MCF 10A (cell line): ENCODE measurements at regions of chr16 and their contacts with region 1.

Region 1: GRCh38 chr16:47141773-47142485 is 1.8 kb downstream of the NETO2 start:
- DNase-seq: peak; percentile 95
- H3K4me3 Mint-ChIP-seq: peak overlapping the region; percentile 80
- H3K27ac Mint-ChIP-seq: peak overlapping the region; percentile 91
- H3K4me1 Mint-ChIP-seq: peaks cover 27% of the 10 kb centered on the region
- H3K27me3 Mint-ChIP-seq: no peaks in the 10 kb centered on the region
- CTCF ChIP-seq: peak; percentile 86

Region 2: GRCh38 chr16:46947900-46948547 is 193.9 kb before region 1 on chr16:
- CTCF ChIA-PET with region 1: no interaction called
- POLR2A ChIA-PET with region 1: no interaction called
- intact Hi-C with region 1: loop called (anchors 2 kb)
- DNase-seq: peak; percentile 57
- H3K4me3 Mint-ChIP-seq: no peak overlapping the region
- H3K27ac Mint-ChIP-seq: no peak overlapping the region
- H3K4me1 Mint-ChIP-seq: no peaks in the 10 kb centered on the region
- H3K27me3 Mint-ChIP-seq: no peaks in the 10 kb centered on the region
- CTCF ChIP-seq: peak; percentile 61

Region 3: GRCh38 chr16:47125757-47126156 is 16.2 kb before region 1 on chr16:
- CTCF ChIA-PET with region 1: interaction called, 51 read pairs
- POLR2A ChIA-PET with region 1: interaction called, 33 read pairs
- intact Hi-C with region 1: no loop called
- DNase-seq: no peak
- H3K4me3 Mint-ChIP-seq: no peak overlapping the region
- H3K27ac Mint-ChIP-seq: no peak overlapping the region
- H3K4me1 Mint-ChIP-seq: no peaks in the 10 kb centered on the region
- H3K27me3 Mint-ChIP-seq: no peaks in the 10 kb centered on the region
- CTCF ChIP-seq: no peak

Region 4: GRCh38 chr16:47574091-47575054 is 432.4 kb after region 1 on chr16:
- CTCF ChIA-PET with region 1: no interaction called
- POLR2A ChIA-PET with region 1: no interaction called
- intact Hi-C with region 1: loop called (anchors 10 kb)
- DNase-seq: peak; percentile 98
- H3K4me3 Mint-ChIP-seq: peak overlapping the region; percentile 68
- H3K27ac Mint-ChIP-seq: peak overlapping the region; percentile 80
- H3K4me1 Mint-ChIP-seq: peaks cover 13% of the 10 kb centered on the region
- H3K27me3 Mint-ChIP-seq: no peaks in the 10 kb centered on the region
- CTCF ChIP-seq: no peak

Region 5: DNA sequence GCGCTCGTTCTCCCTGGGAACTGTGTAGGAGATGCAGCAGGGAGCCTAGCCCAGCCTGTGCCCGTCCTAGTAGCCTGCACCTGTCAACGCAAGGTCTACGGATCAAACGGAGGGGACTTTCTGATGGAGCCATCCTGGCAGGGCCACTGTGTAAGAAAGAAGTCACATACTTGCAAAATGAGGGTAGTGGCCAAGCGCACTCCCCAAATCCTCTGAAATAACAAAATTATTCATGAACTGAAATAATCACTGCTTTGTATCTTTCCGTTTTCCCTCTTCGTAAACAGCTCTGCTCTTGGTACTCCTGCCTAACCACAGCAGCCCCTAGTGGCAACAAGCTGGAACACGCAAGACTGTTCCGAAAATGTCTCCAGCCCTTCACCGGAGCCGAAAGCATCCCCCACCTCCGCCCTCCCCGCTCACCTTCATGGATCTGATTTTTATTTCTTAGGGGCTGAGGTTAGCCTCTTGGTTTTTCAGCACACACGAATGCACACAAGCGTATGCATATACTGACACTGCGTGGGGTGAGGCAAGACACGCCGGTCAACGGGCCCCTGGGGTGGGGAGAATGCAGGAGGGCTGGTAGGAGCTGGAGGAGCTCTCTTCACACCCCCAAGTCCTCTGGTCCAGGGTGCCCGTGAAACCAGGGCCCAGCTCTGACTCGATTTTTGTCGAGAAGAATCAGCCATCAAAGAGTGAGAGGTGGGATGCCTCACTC is 913.1 kb after region 1 on chr16:
- CTCF ChIA-PET with region 1: interaction called, 28 read pairs
- POLR2A ChIA-PET with region 1: interaction called, 10 read pairs
- intact Hi-C with region 1: loop called (anchors 1 kb)
- DNase-seq: peak; percentile 55
- H3K4me3 Mint-ChIP-seq: no peak overlapping the region
- H3K27ac Mint-ChIP-seq: no peak overlapping the region
- H3K4me1 Mint-ChIP-seq: peaks cover 10% of the 10 kb centered on the region
- H3K27me3 Mint-ChIP-seq: no peaks in the 10 kb centered on the region
- CTCF ChIP-seq: peak; percentile 89

Region 6: GRCh38 chr16:48164907-48165726 is 1023.2 kb after region 1 on chr16:
- CTCF ChIA-PET with region 1: interaction called, 48 read pairs
- POLR2A ChIA-PET with region 1: interaction called, 5 read pairs
- intact Hi-C with region 1: loop called (anchors 2 kb)
- DNase-seq: peak; percentile 78
- H3K4me3 Mint-ChIP-seq: peak overlapping the region; percentile 2
- H3K27ac Mint-ChIP-seq: no peak overlapping the region
- H3K4me1 Mint-ChIP-seq: peaks cover 5% of the 10 kb centered on the region
- H3K27me3 Mint-ChIP-seq: no peaks in the 10 kb centered on the region
- CTCF ChIP-seq: peak; percentile 85